ENCODE measurements at regions of chr3 and their contacts with region 1.

Region 1: GRCh38 chr3:104234442-104235194 is 1132.1 kb upstream of the ALCAM start:
- DNase-seq: no peak
- H3K4me3 ChIP-seq: no peak overlapping the region
- CTCF ChIP-seq: no peak

Region 2: GRCh38 chr3:104132566-104133403 is 101.8 kb before region 1 on chr3:
- in situ Hi-C with region 1: loop called (anchors 5 kb)
- DNase-seq: no peak
- H3K4me3 ChIP-seq: no peak overlapping the region
- CTCF ChIP-seq: no peak

Region 3: DNA sequence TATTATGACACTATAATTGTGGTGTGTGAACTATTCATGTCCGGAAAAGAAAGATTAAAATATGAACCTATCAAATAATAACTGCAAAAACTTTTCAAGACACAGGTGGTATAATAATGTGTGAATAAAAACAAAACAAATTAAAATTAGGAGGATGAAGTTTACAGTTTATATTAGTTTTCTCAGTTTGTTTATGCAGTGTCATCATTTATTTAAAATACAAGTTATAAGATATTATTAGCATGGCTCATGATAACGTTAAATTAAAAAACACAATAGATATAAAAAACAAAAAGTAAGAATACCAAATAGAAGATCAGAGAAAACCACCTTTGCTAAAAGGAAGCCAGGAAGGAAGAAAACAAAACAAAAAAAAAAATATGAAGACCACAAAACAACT is 168.3 kb after region 1 on chr3:
- in situ Hi-C with region 1: no loop called
- DNase-seq: no peak
- H3K4me3 ChIP-seq: no peak overlapping the region
- CTCF ChIP-seq: no peak

Region 4: GRCh38 chr3:105304487-105304886 is 1069.9 kb after region 1 on chr3:
- in situ Hi-C with region 1: no loop called
- DNase-seq: no peak
- H3K4me3 ChIP-seq: no peak overlapping the region
- CTCF ChIP-seq: no peak

Measured in astrocyte of the cerebellum (primary cell).